ENCODE measurements at regions of chr6 and their contacts with region 1.

Region 1: GRCh38 chr6:17653198-17653882 is 53.2 kb downstream of the FAM8A1 start:
- DNase-seq: no peak
- ATAC-seq: no peak
- H3K4me3 ChIP-seq: no peak overlapping the region
- H3K4me3 Mint-ChIP-seq: no peak overlapping the region
- H3K27ac ChIP-seq: no peak overlapping the region
- H3K27ac Mint-ChIP-seq: no peak overlapping the region
- H3K4me1 ChIP-seq: no peaks in the 10 kb centered on the region
- H3K4me1 Mint-ChIP-seq: peaks cover 3% of the 10 kb centered on the region
- H3K27me3 ChIP-seq: no peaks in the 10 kb centered on the region
- H3K27me3 Mint-ChIP-seq: no peaks in the 10 kb centered on the region
- CTCF ChIP-seq: no peak

Region 2: DNA sequence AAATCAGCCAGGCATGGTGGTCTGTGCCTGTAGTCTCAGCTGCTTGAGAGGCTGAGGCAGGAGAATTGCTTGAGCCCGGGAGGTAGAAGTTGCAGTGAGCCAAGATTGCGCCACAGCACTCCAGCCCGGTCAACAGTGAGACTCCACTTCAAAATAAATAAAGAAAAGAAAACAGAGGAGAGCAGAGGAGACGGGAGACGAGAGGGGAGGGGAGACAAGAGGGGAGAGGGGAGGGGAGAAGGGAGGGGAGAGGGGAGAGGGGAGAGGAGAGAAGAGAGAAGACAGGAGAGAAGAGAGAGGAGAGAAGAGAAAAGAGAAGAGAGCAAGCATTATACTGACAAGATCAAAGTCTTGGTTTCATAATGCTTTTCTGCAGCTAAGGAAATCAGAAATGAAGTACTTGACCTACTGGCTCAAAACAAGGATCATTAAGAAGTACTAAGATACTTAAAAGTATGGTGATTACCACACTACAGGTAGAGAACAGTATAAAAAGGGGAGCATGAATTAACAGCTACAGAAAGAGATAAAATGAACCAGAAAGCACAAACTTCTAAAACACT is 22.7 kb before region 1 on chr6:
- CTCF ChIA-PET with region 1: no interaction called
- POLR2A ChIA-PET with region 1: interaction called, 10 read pairs
- intact Hi-C with region 1: no loop called
- DNase-seq: no peak
- ATAC-seq: no peak
- H3K4me3 ChIP-seq: no peak overlapping the region
- H3K4me3 Mint-ChIP-seq: no peak overlapping the region
- H3K27ac ChIP-seq: peak overlapping the region in 1 of 2 donors; percentile 12
- H3K27ac Mint-ChIP-seq: peak overlapping the region; percentile 15
- H3K4me1 ChIP-seq: peaks cover 6 to 15% of the 10 kb centered on the region in 2 donors
- H3K4me1 Mint-ChIP-seq: peaks cover 39% of the 10 kb centered on the region
- H3K27me3 ChIP-seq: no peaks in the 10 kb centered on the region
- H3K27me3 Mint-ChIP-seq: no peaks in the 10 kb centered on the region
- CTCF ChIP-seq: no peak